Activated naive CD4-positive, alpha-beta T cell treated with anti-CD3 and anti-CD28 coated beads for 36 hours (primary cell): ENCODE measurements at regions of chr17 and their contacts with region 1.

Region 1: GRCh38 chr17:73429440-73430164 is 117.8 kb upstream of the CDC42EP4 start:
- DNase-seq: peak; percentile 93
- H3K4me3 Mint-ChIP-seq: no peak overlapping the region
- H3K27ac Mint-ChIP-seq: no peak overlapping the region
- H3K4me1 Mint-ChIP-seq: peaks cover 3% of the 10 kb centered on the region
- H3K27me3 Mint-ChIP-seq: no peaks in the 10 kb centered on the region

Region 2: DNA sequence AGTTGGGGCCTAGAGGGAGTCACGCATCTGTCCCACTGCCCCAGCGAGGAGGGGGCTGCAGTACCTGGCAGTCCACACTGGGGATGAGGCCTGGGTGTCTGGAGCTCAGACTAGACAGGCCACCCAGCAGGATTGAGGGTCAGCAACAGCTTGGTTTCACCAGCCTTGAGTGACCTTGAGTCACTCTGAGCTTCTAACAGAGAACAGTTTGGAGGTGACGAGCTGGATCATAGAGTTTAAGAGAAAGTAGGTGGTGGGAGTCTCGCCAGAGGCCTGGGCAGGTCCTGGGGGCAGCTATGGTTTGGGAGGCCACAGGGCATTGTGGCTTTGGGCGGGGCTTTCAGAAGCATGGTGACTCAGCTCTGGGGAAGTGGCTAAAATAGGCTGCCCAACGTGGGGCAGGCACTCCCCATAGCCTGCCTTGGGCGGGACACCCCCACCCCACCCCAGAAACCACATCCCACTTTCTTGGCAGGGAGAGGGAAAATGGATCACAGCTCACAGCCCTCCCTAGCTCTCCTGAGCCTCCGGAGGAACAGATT is 138.3 kb before region 1 on chr17:
- CTCF ChIA-PET with region 1: no interaction called
- intact Hi-C with region 1: no loop called
- DNase-seq: no peak
- H3K4me3 Mint-ChIP-seq: no peak overlapping the region
- H3K27ac Mint-ChIP-seq: no peak overlapping the region
- H3K4me1 Mint-ChIP-seq: peaks cover 7% of the 10 kb centered on the region
- H3K27me3 Mint-ChIP-seq: no peaks in the 10 kb centered on the region

Region 3: DNA sequence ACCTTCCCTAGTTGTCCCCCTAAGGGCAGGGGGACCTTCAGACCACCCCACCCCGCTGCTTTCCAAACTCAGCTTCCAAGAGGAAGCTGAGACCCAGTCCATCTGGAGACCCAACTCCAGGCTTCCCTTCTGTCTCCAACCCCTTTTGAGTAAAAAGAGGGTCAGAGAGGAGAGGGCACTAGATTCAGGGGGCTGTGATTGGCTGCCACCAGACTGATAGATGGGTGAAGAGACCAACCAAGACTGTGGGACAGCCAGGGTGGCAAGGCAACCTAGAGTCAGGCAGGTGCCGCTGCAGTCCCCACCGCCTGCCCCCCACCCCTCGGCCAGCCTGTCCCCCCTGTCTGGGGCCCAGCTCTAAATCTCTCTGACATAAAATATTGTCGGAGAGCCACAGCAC is 122.2 kb after region 1 on chr17:
- CTCF ChIA-PET with region 1: interaction called, 15 read pairs
- intact Hi-C with region 1: no loop called
- DNase-seq: peak; percentile 35
- H3K4me3 Mint-ChIP-seq: peak overlapping the region; percentile 61
- H3K27ac Mint-ChIP-seq: no peak overlapping the region
- H3K4me1 Mint-ChIP-seq: peaks cover 3% of the 10 kb centered on the region
- H3K27me3 Mint-ChIP-seq: no peaks in the 10 kb centered on the region

Region 4: DNA sequence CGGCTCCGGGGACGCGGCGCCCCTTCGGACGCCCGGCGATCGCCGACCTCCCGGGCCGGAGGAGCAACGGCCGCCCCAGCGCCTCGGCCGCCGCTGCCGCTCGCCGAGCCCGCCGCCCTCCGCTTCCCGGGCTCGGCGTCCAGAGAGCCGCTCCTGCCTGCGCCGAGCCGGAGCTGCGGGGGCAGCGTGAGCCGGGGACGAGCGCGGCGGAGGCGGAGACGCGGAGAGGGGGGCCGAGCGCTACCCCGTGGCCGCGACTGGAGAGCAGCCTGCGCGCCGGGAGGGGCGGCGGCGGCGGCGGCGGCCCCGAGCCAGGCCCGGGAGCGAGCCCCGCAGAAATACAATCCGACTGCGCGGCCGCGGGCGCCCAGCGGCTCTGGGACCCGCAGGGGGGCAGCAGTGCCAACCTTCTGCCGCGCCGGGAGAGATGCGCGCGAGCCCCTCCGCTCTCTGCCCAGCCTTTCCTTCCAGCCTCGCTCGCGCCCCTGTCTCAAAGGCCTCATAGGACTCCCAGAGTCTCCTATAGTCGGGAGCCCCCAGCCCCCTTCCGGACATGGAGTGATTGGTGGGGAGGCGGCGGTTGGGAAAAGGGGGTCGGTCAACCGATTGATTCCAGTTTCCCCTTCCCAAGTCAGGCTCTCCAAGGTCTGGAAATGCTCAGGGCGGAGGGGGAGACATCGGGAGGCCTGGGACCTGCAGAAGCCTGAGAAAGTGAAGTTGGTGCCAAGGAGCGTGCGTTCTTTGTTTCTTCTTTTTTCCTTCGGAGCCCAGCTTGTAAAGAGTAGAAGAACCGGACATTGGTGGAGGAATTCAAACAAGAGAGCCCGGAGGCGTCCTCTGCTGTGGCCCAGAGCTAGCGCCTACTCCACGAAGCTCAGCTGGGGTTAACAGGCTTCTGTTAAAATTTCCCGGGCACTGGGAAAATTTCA is 215.7 kb after region 1 on chr17:
- CTCF ChIA-PET with region 1: interaction called, 6 read pairs
- intact Hi-C with region 1: loop called (anchors 2 kb)
- DNase-seq: peak; percentile 31
- H3K4me3 Mint-ChIP-seq: no peak overlapping the region
- H3K27ac Mint-ChIP-seq: no peak overlapping the region
- H3K4me1 Mint-ChIP-seq: peaks cover 16% of the 10 kb centered on the region
- H3K27me3 Mint-ChIP-seq: peaks cover 25% of the 10 kb centered on the region

Region 5: GRCh38 chr17:73841431-73842060 is 411.9 kb after region 1 on chr17:
- CTCF ChIA-PET with region 1: no interaction called
- intact Hi-C with region 1: loop called (anchors 1 kb)
- DNase-seq: peak; percentile 43
- H3K4me3 Mint-ChIP-seq: no peak overlapping the region
- H3K27ac Mint-ChIP-seq: no peak overlapping the region
- H3K4me1 Mint-ChIP-seq: peaks cover 10% of the 10 kb centered on the region
- H3K27me3 Mint-ChIP-seq: no peaks in the 10 kb centered on the region

Region 6: GRCh38 chr17:73998653-73999645 is 569.3 kb after region 1 on chr17:
- CTCF ChIA-PET with region 1: interaction called, 3 read pairs
- intact Hi-C with region 1: loop called (anchors 1 kb)
- DNase-seq: peak; percentile 79
- H3K4me3 Mint-ChIP-seq: no peak overlapping the region
- H3K27ac Mint-ChIP-seq: no peak overlapping the region
- H3K4me1 Mint-ChIP-seq: no peaks in the 10 kb centered on the region
- H3K27me3 Mint-ChIP-seq: peaks cover 4% of the 10 kb centered on the region